ENCODE measurements at regions of chr1 and their contacts with region 1.

Region 1: GRCh38 chr1:109213785-109214468 is at the start of gene SARS1:
- DNase-seq: peak; percentile 95
- ATAC-seq: peak; percentile 86
- H3K4me3 Mint-ChIP-seq: peak within 1 kb of the TSS; percentile 97
- H3K27ac Mint-ChIP-seq: peak within 1 kb of the TSS; percentile 95
- H3K4me1 Mint-ChIP-seq: peaks cover 26% of the 10 kb centered on the region
- H3K27me3 Mint-ChIP-seq: no peaks in the 10 kb centered on the region
- total RNA-seq, gene SARS1: 176 to 184 TPM

Region 2: GRCh38 chr1:108862698-108863477 is 351.0 kb before region 1 on chr1:
- POLR2A ChIA-PET with region 1: no interaction called
- DNase-seq: no peak
- ATAC-seq: no peak
- H3K4me3 Mint-ChIP-seq: no peak overlapping the region
- H3K27ac Mint-ChIP-seq: no peak overlapping the region
- H3K4me1 Mint-ChIP-seq: peaks cover 5% of the 10 kb centered on the region
- H3K27me3 Mint-ChIP-seq: peaks cover 30% of the 10 kb centered on the region

Region 3: DNA sequence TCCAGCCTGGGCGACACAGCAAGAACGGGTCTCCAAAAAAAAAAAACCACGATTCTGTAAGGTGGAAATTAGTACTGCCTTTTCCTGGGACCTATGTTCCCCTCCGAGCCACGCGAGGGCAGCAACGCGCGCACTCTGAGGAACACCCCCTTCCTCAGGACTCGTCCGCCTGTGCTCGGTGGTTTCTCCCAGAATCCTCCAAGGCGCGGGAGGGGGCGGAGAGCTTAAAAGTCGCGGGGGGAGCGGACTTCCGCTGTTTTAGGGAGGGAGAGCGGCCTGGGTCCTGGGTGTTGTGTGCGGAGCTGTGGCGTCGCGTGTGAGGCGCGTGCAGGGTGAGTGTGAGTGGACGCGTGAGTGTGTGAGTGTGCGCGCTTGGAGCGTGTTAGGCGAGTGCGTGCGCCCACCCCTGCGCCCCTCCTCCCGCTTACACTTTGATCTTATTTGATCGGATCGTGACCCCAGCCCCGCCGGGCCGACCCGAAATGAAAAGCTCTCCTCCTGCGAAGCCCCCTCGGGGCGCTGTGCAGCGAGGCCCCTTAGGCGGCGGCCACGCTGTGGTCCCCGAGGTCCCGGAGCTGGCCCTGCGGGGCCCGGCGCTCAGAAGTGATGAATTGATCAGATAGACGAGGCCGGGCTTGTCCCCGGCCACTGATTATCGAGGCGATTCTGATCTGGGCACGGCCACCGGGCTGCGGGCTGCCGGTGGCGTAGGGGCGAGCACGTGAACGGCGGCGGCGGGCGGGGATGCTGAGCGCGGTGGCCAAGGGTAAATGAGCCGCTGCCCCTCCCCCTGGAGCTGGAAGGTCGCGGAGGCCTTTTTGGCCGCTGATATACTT is 113.8 kb before region 1 on chr1:
- POLR2A ChIA-PET with region 1: interaction called, 23 read pairs
- DNase-seq: peak; percentile 94
- ATAC-seq: peak; percentile 95
- H3K4me3 Mint-ChIP-seq: peak overlapping the region; percentile 93
- H3K27ac Mint-ChIP-seq: peak overlapping the region; percentile 95
- H3K4me1 Mint-ChIP-seq: peaks cover 11% of the 10 kb centered on the region
- H3K27me3 Mint-ChIP-seq: no peaks in the 10 kb centered on the region

Region 4: DNA sequence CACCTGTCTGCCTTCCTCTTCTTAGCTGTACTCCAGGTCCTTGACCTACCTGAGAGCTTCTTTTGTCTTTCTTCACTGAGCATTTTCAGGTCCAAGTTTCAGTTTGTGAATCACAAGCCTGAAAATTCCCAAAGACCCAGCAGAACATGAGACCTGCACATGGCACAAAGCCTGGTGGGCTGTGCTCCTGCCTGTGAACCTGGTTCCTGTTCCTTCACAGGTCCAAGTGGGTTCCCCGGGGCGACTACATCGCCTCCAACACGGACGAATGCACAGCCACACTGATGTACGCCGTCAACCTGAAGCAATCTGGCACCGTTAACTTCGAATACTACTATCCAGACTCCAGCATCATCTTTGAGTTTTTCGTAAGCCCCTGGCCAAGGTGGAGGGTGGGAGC is 42.3 kb before region 1 on chr1:
- POLR2A ChIA-PET with region 1: no interaction called
- DNase-seq: no peak
- ATAC-seq: no peak
- H3K4me3 Mint-ChIP-seq: no peak overlapping the region
- H3K27ac Mint-ChIP-seq: no peak overlapping the region
- H3K4me1 Mint-ChIP-seq: peaks cover 13% of the 10 kb centered on the region
- H3K27me3 Mint-ChIP-seq: no peaks in the 10 kb centered on the region

Region 5: DNA sequence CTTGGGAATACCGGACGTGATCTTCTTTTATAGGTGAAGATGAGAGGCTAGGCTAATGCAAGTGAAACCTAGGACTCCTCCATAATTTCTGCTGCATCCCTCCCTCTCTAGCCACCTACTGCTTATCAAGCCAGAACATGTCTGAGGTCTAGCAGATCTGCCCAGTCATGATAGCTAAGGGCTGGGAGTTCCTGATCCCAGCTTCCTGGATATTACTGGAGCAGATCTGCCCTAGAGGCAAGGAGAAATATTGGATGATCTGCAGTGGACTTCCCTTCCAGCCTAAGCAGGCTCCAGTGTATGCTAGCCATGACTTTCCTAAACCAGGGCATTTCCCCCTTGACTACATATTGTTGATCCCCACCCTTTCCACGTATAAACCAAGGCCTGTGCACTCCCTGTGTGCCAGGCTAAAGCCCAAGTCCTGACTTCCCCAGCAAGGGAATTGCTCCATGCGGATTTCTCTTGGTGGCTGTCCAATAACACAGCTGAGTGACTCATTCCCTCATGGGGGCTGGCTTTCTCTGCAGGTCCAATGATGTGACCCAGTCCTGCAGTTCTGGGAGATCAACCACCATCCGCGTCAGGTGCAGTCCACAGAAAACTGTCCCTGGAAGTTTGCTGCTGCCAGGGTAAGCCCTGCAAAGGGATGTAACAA is 15.8 kb before region 1 on chr1:
- POLR2A ChIA-PET with region 1: interaction called, 20 read pairs
- DNase-seq: no peak
- ATAC-seq: no peak
- H3K4me3 Mint-ChIP-seq: no peak overlapping the region
- H3K27ac Mint-ChIP-seq: no peak overlapping the region
- H3K4me1 Mint-ChIP-seq: peaks cover 23% of the 10 kb centered on the region
- H3K27me3 Mint-ChIP-seq: no peaks in the 10 kb centered on the region

Region 6: DNA sequence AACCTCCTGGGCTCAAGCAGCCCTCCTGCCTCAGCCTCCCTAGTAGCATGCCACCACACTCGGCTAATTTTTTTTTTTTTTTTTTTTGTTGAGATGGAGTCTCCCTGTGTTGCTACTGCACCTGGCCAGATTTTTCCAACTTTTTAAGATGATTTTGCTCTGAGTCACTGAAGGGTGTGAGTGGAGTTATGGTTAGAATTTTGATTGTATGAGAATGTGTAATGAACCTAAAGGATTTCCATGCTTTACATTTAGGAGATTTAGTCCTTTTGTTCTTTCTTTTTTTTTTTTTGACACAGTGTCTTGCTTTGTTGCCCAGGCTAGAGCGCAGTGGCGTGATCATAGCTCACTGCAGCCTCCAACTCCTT is 12.1 kb after region 1 on chr1:
- POLR2A ChIA-PET with region 1: interaction called, 13 read pairs
- DNase-seq: no peak
- ATAC-seq: no peak
- H3K4me3 Mint-ChIP-seq: no peak overlapping the region
- H3K27ac Mint-ChIP-seq: no peak overlapping the region
- H3K4me1 Mint-ChIP-seq: peaks cover 18% of the 10 kb centered on the region
- H3K27me3 Mint-ChIP-seq: no peaks in the 10 kb centered on the region

Region 7: DNA sequence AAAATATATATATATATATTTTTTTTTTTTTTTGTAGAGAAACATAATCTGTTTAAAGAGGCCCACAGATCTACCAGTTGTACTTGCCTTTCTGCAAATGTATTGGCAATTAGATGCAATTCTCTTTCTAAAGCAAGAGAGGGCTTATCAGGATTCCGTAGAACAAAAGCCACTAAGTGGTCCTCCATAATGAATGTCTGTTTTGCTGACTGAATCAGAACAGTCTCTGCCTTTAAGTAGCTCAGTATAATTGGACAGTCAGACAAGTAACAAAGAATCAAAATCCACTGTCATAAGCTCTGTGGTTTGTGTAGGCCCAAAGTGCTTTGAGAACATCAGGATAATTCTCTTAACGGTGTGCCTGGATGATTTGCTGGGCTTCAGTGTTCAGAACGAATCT is 17.1 kb after region 1 on chr1:
- POLR2A ChIA-PET with region 1: interaction called, 10 read pairs
- DNase-seq: no peak
- ATAC-seq: no peak
- H3K4me3 Mint-ChIP-seq: no peak overlapping the region
- H3K27ac Mint-ChIP-seq: no peak overlapping the region
- H3K4me1 Mint-ChIP-seq: peaks cover 14% of the 10 kb centered on the region
- H3K27me3 Mint-ChIP-seq: no peaks in the 10 kb centered on the region

Region 8: DNA sequence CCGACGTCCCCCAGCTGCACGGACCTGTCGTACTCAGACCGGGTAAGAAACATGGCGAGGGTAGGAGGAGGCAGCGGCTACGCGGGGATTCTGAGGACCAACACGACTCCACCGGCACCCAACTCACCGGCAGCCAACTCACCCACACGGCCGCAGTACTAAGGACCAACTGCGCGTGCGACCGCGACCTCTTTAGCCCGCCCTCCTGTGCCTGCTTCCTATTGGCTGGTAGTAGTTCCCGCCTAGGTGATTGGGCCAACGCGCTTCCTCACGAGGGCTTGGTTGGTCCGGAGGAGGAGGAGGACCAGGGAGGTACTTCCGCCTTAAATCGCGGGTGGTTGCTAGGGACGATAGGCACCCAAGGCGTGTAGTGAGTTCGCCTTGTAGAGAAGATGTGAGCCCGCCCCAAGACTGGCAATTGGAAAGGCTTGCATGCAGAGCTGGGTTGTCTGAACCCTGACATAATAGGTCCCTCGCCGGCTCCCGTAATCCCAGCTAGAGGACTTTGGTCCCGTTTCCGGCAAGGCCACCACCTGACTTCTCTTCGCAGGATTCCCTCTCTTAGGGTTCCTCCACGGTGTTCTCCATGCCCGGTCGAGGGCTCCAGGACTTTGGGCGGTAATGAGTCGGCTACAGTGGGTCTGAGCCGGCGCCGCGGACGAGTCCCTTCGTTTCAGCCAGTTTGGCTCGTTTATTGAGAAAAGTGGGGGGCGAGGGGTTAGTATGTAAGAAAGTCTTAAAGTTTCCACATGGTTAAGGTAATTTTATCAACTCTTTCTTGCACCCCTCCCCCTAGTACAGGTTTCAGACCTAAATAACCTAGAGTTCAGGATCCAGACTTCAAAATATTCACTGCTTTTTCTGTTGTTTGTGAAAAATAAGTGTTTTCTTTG is 212.6 kb after region 1 on chr1 and contains the start of gene PSMA5:
- POLR2A ChIA-PET with region 1: interaction called, 15 read pairs
- DNase-seq: peak; percentile 89
- ATAC-seq: peak; percentile 93
- H3K4me3 Mint-ChIP-seq: peak within 1 kb of the TSS; percentile 93
- H3K27ac Mint-ChIP-seq: peak within 1 kb of the TSS; percentile 97
- H3K4me1 Mint-ChIP-seq: peaks cover 27% of the 10 kb centered on the region
- H3K27me3 Mint-ChIP-seq: no peaks in the 10 kb centered on the region
- total RNA-seq, gene PSMA5: 135 TPM

Region 9: GRCh38 chr1:109722908-109723691 is 509.2 kb after region 1 on chr1:
- POLR2A ChIA-PET with region 1: no interaction called
- DNase-seq: no peak
- ATAC-seq: no peak
- H3K4me3 Mint-ChIP-seq: no peak overlapping the region
- H3K27ac Mint-ChIP-seq: no peak overlapping the region
- H3K4me1 Mint-ChIP-seq: no peaks in the 10 kb centered on the region
- H3K27me3 Mint-ChIP-seq: peaks cover 21% of the 10 kb centered on the region

Measured in activated naive CD8-positive, alpha-beta T cell treated with anti-CD3 and anti-CD28 coated beads, Interleukin-2, amount 10 ng/mL, durations not matched to agents 7 days and 5 days (primary cell).